ENCODE measurements at regions of chr3 and their contacts with region 1.

Region 1: GRCh38 chr3:23202921-23203707 is at the start of gene UBE2E2:
- DNase-seq: peak; percentile 81 to 92
- ATAC-seq: peak; percentile 92
- H3K4me3 ChIP-seq: peak within 1 kb of the TSS; percentile 80 to 86
- H3K27ac ChIP-seq: peak within 1 kb of the TSS in 1 of 2 donors; percentile 62
- H3K4me1 ChIP-seq: no peaks in the 10 kb centered on the region
- H3K27me3 ChIP-seq: no peaks in the 10 kb centered on the region
- total RNA-seq, gene UBE2E2: 39.3 to 56.5 TPM

Region 2: DNA sequence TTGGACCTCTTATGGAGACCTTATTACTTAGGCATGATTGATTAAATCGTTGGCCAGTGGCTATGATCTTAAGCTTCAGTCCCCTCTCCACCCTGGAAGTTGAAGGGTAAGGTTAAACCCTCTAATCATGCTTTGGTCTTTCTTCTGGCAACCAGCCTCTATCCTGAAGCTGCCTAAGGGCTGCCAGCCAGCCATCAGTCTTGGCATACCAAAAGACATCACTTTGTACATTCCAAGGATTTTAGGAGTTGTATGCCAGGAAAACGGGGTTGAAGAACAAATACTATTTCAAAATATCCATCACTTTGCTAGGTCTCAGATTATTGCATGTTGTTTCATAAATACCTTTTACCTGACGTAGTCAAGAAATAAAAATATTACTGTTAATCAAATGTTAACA is 28.9 kb after region 1 on chr3:
- intact Hi-C with region 1: loop called in 1 of 2 experiments (anchors 1 kb)
- DNase-seq: no peak
- ATAC-seq: no peak
- H3K4me3 ChIP-seq: no peak overlapping the region
- H3K27ac ChIP-seq: no peak overlapping the region
- H3K4me1 ChIP-seq: peaks cover 0 to 3% of the 10 kb centered on the region in 2 donors
- H3K27me3 ChIP-seq: no peaks in the 10 kb centered on the region

Region 3: GRCh38 chr3:23805633-23806533 is 602.8 kb after region 1 on chr3 and contains the start of gene UBE2E1:
- intact Hi-C with region 1: loop called (anchors 10 kb)
- DNase-seq: peak; percentile 85 to 91
- ATAC-seq: peak; percentile 75
- H3K4me3 ChIP-seq: peak within 1 kb of the TSS; percentile 69 to 96
- H3K27ac ChIP-seq: no peak within 1 kb of the TSS
- H3K4me1 ChIP-seq: no peaks in the 10 kb centered on the region
- H3K27me3 ChIP-seq: no peaks in the 10 kb centered on the region
- total RNA-seq, gene UBE2E1: 87.2 to 96.8 TPM